PC-9 (cell line): ENCODE measurements at regions of chr11 and their contacts with region 1.

Region 1: DNA sequence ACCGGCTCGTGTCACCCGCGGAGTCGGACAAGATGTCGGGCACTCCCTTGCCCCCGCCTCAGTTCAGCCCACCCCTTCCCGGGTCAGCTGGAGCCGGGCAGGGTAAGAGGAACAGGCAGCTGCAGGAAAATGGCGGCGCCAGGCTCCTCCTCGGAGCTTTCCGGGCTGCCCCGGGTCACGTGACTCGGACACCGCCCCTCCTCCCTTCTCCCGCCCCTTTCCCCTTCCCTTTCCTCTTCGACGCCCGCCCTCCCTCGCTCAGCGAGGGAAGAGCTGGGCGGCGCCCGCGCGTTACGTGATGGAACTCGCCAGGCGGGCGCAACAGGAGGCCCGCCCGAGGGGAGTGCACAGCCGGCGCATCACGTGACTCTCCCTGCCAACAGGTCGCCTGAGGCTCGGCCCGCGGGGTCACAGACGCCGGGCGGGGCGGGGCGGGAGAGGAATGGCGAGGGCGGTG is at the start of gene PICALM:
- DNase-seq: peak; percentile 97
- H3K4me3 ChIP-seq: peak within 1 kb of the TSS; percentile 85
- H3K27ac ChIP-seq: peak within 1 kb of the TSS; percentile 99
- H3K4me1 ChIP-seq: peaks cover 42% of the 10 kb centered on the region
- H3K27me3 ChIP-seq: no peaks in the 10 kb centered on the region
- CTCF ChIP-seq: no peak
- total RNA-seq, gene PICALM: 92.3 and 116 TPM in 2 replicates

Region 2: DNA sequence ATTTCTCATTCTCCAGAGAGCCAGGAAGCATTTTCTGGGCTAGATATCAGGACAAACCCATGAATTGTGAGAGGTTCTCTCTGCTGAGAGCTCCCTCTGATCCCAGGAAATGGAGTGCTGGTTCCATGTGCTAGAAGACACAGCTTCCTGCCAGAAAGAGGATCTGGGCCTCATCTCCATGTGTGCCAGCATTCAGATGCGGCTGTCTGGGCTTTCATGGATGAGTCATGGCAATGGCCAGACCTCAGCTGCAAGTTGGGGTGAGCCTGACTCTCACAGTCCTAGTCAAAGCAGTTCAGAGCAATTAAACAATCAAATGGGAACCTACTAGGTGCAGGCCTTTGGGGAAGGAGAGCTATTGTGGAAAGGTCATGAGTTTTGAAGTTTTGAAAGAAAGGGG is 93.3 kb after region 1 on chr11:
- CTCF ChIA-PET with region 1: no interaction called
- POLR2A ChIA-PET with region 1: interaction called, 8 read pairs
- intact Hi-C with region 1: loop called (anchors 1 kb)
- DNase-seq: no peak
- H3K4me3 ChIP-seq: no peak overlapping the region
- H3K27ac ChIP-seq: no peak overlapping the region
- H3K4me1 ChIP-seq: peaks cover 56% of the 10 kb centered on the region
- H3K27me3 ChIP-seq: no peaks in the 10 kb centered on the region
- CTCF ChIP-seq: no peak

Region 3: GRCh38 chr11:86193297-86194095 is 124.5 kb after region 1 on chr11:
- CTCF ChIA-PET with region 1: interaction called, 5 read pairs
- POLR2A ChIA-PET with region 1: interaction called, 3 read pairs
- intact Hi-C with region 1: loop called (anchors 1 kb)
- DNase-seq: peak; percentile 63 to 82
- H3K4me3 ChIP-seq: peak overlapping the region; percentile 20; the same call in 1 of the 2 replicates
- H3K27ac ChIP-seq: peak overlapping the region; percentile 37
- H3K4me1 ChIP-seq: peaks cover 13% of the 10 kb centered on the region
- H3K27me3 ChIP-seq: no peaks in the 10 kb centered on the region
- CTCF ChIP-seq: peak; percentile 92

Region 4: DNA sequence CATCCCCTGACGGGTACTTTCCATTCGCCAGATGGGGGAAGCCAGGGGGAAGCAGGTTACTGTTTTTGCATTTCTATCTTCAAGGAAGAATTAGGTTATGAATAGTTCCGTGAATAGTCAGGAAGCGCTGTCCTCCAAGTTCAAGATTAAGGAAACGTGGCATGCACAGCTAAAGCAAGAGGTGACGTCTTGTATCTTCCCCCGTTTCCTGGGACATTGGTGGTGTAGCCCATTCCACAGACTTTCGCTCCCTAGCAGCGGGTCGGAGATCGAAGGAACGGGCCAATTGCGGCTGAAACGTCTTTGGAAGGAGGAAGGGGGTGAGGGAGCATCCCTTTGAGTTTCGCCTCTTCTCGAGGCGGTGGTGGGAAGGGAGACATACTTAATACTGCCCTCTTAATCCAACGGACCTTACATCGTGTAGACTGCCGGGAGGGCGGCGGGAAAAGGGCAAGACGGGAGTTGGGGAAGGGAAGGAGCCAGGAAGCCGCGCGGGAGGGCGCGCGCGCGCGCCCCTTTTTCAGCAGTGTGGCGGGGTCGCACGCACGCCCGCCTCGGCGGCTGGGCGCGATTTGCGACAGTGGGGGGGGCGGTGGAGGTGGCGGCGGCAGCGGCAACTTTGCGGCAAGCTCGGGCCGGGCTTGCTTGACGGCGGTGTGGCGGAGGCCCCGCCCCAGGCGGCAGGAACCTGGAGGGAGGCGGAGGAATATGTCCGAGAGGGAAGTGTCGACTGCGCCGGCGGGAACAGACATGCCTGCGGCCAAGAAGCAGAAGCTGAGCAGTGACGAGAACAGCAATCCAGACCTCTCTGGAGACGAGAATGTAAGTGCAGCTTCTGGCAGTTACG is 175.8 kb after region 1 on chr11 and contains the start of gene EED:
- CTCF ChIA-PET with region 1: no interaction called
- POLR2A ChIA-PET with region 1: no interaction called
- intact Hi-C with region 1: loop called (anchors 1 kb)
- DNase-seq: peak; percentile 93 to 94
- H3K4me3 ChIP-seq: peak within 1 kb of the TSS; percentile 67
- H3K27ac ChIP-seq: peak within 1 kb of the TSS; percentile 92
- H3K4me1 ChIP-seq: peaks cover 45% of the 10 kb centered on the region
- H3K27me3 ChIP-seq: no peaks in the 10 kb centered on the region
- CTCF ChIP-seq: 0 out of 2 replicates have a peak, but pooled peaks have one; percentile 18
- total RNA-seq, gene EED: 33.4 and 37.4 TPM in 2 replicates